Activated B cell treated with CpG ODN at 0.5 μM for 24 hours (primary cell): ENCODE measurements at regions of chr2 and their contacts with region 1.

Region 1: DNA sequence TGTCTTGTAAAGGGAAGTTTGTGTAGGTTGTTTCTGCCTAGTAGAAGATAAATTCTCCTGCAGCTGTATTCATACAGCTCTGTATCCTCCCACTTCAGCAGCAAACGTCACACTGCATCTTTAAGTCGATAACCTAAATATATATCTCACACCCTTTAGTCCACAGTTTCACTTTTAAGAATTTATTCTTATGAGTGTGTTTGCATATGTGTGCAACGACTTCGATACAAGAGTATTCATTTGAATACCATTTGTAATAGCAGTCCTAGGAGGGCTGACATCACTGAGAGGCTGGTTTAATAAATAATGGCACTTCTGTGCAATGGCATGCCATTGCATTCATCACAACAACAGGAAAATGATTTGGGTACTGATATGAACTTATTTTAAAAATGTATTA is 63.8 kb upstream of the MSH6 start:
- DNase-seq: no peak
- ATAC-seq: peak; percentile 49
- H3K4me3 Mint-ChIP-seq: peak overlapping the region; percentile 25
- H3K27ac Mint-ChIP-seq: no peak overlapping the region
- H3K4me1 Mint-ChIP-seq: peaks cover 55% of the 10 kb centered on the region
- H3K27me3 Mint-ChIP-seq: no peaks in the 10 kb centered on the region
- CTCF ChIP-seq: no peak

Region 2: DNA sequence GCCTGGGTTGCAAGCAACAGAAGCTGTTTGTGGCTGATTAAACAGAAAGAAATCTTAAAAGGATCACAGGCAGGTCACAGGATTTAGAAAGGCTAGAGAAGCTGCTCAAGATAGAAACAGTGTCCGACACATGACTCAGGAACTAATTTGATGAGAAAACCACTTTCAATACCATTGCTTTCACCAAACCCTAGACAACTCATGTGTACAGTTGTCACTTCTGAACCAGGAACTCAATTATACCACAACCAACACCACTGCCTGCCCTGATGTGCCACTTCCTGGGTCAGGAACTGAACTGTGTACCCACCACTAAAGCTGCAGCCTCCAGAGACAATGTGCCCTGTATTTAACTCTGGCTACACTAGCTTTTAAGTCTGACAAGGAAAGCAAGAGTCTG is 1183.7 kb before region 1 on chr2:
- CTCF ChIA-PET with region 1: no interaction called
- POLR2A ChIA-PET with region 1: interaction called, 10 read pairs
- intact Hi-C with region 1: no loop called
- DNase-seq: no peak
- ATAC-seq: peak; percentile 73
- H3K4me3 Mint-ChIP-seq: peak overlapping the region; percentile 62
- H3K27ac Mint-ChIP-seq: peak overlapping the region; percentile 89
- H3K4me1 Mint-ChIP-seq: peaks cover 60% of the 10 kb centered on the region
- H3K27me3 Mint-ChIP-seq: no peaks in the 10 kb centered on the region
- CTCF ChIP-seq: no peak